Heart right ventricle (tissue), 16 donors: ENCODE measurements at regions of chr21 and their contacts with region 1.

Region 1: DNA sequence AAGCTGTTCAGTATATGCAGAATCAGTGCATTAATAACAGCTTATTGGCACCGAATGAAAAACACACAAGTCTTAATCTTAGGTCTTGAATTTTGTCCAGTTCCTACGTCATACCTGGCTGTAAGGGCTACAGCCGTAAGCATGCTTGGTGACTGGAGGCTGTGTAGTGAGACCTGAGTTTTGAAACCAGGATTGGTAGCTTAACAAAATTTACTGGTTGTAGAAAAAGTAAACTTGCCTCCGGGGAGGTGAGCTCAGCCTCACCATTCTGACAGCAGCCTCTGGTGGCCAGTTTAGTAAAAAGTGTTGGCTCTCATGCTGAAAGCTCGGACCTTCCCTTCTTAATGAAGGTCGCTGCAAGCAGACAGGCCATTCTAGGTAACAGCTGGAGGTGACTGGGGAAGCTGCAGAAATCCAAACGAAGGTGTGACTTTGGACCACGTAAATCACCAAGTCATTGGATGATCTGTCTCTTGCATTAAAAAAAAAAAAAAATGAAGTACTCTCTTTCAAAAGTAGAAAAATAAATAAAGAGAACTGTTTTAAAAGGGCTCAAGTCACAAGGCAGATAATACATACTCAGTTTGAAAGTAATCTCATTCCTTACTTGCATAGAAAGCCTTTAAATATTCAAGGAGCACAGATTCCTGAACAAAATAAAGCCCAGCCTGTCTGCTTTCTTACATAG is 48.9 kb downstream of the HLCS start:
- DNase-seq: peak in 1 of 2 donors; percentile 16
- ATAC-seq: peak in 6 of 8 donors; percentile 34 to 76 (median 56)
- H3K4me3 ChIP-seq: no peak overlapping the region
- H3K27ac ChIP-seq: no peak overlapping the region
- H3K4me1 ChIP-seq: peaks cover 0 to 19% (median 11%) of the 10 kb centered on the region in 9 donors
- H3K27me3 ChIP-seq: no peaks in the 10 kb centered on the region
- CTCF ChIP-seq: peak; percentile 28 to 73 (median 48)

Region 2: GRCh38 chr21:36630485-36631206 is 287.0 kb before region 1 on chr21:
- intact Hi-C with region 1: loop called in 4 of 10 experiments (anchors 5 to 10 kb)
- DNase-seq: peak; percentile 39 to 41
- ATAC-seq: peak in 3 of 8 donors; percentile 33 to 41 (median 37)
- H3K4me3 ChIP-seq: no peak overlapping the region
- H3K27ac ChIP-seq: no peak overlapping the region
- H3K4me1 ChIP-seq: no peaks in the 10 kb centered on the region
- H3K27me3 ChIP-seq: peaks cover 0 to 57% (median 34%) of the 10 kb centered on the region in 7 donors
- CTCF ChIP-seq: peak; percentile 51 to 82 (median 70)

Region 3: DNA sequence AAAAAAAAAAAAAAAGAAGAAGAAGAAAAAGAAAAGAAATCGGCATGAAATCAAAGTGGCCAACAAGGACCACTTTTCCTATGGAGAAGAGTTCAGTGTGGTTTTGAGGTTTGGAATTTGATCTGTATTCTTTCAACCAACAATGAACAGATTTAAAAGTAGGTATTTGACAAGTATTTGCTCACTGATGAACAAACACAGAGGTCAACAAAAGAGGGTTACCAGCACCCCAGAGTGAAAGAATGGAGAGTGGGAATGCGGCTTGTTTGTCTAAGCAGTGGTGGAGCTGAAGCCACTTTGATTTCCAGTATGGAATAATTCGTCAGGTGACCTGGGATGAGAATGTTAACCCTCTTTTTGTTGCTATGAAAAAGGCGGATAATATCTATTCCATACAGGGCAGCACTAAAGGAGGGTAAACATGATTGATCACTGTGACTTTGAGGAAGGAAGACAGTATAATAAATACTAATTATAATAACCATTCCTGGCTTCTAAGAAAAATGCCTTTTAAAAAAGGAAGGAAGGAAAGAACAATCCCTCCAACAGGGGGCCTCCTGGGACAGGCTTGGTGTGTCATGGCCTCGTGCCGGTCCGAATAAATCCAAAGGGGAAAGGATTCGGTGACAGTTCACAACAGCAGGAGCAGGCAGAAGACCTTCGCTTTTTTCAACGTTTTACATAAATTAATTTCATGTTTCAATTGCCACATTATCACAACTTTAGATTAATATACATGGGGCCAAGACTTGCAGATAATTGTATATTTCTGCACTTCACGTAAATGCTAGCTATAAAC is 255.9 kb before region 1 on chr21:
- intact Hi-C with region 1: loop called in 1 of 10 experiments (anchors 5 kb)
- DNase-seq: peak in 1 of 2 donors; percentile 36
- ATAC-seq: peak in 2 of 8 donors; percentile 47 to 63
- H3K4me3 ChIP-seq: no peak overlapping the region
- H3K27ac ChIP-seq: no peak overlapping the region
- H3K4me1 ChIP-seq: peaks cover 0 to 4% (median 0%) of the 10 kb centered on the region in 9 donors
- H3K27me3 ChIP-seq: peaks cover 0 to 71% (median 50%) of the 10 kb centered on the region in 7 donors
- CTCF ChIP-seq: peak in 7 of 9 donors; percentile 38 to 63 (median 52)

Region 4: GRCh38 chr21:36692835-36693488 is 224.7 kb before region 1 on chr21:
- intact Hi-C with region 1: no loop called
- DNase-seq: no peak
- ATAC-seq: peak in 3 of 8 donors; percentile 20 to 43 (median 31)
- H3K4me3 ChIP-seq: no peak overlapping the region
- H3K27ac ChIP-seq: no peak overlapping the region
- H3K4me1 ChIP-seq: peaks cover 3 to 37% (median 24%) of the 10 kb centered on the region in 9 donors
- H3K27me3 ChIP-seq: peaks cover 52 to 100% (median 94%) of the 10 kb centered on the region in 7 donors
- CTCF ChIP-seq: peak in 6 of 9 donors; percentile 15 to 31 (median 18)

Region 5: GRCh38 chr21:36747815-36748383 is 169.7 kb before region 1 on chr21:
- intact Hi-C with region 1: loop called in 7 of 10 experiments (anchors 5 to 10 kb)
- DNase-seq: peak; percentile 38 to 60
- ATAC-seq: peak; percentile 42 to 85 (median 66)
- H3K4me3 ChIP-seq: peak overlapping the region; percentile 34 to 60 (median 53)
- H3K27ac ChIP-seq: peak overlapping the region in 1 of 10 donors; percentile 39
- H3K4me1 ChIP-seq: peaks cover 0 to 28% (median 9%) of the 10 kb centered on the region in 9 donors
- H3K27me3 ChIP-seq: peaks cover 0 to 51% (median 13%) of the 10 kb centered on the region in 7 donors
- CTCF ChIP-seq: peak in 5 of 9 donors; percentile 6 to 38 (median 35)

Region 6: DNA sequence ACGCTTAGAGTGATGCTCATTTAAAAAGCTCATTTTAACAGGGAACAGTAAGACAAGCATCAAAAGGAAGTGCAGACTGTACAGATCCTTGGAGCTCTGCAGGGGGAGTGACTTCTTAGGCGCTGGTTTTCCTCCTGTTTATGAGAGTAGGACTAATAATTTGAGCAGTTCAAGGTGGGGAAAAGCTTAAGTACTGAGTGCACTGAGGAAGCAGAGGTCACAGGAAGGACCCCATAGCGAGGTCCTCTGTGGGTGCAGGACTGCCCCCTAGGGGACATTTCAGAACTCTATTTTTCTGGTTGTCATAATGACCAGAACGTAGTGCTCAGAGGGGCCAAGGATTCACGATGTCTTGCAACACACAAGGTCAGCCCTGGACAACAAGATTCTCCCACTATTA is 63.2 kb before region 1 on chr21:
- intact Hi-C with region 1: loop called in 1 of 10 experiments (anchors 10 kb)
- DNase-seq: peak in 1 of 2 donors; percentile 41
- ATAC-seq: peak; percentile 38 to 86 (median 66)
- H3K4me3 ChIP-seq: no peak overlapping the region
- H3K27ac ChIP-seq: no peak overlapping the region
- H3K4me1 ChIP-seq: peaks cover 0 to 9% (median 0%) of the 10 kb centered on the region in 9 donors
- H3K27me3 ChIP-seq: no peaks in the 10 kb centered on the region
- CTCF ChIP-seq: peak; percentile 32 to 79 (median 66)

Region 7: DNA sequence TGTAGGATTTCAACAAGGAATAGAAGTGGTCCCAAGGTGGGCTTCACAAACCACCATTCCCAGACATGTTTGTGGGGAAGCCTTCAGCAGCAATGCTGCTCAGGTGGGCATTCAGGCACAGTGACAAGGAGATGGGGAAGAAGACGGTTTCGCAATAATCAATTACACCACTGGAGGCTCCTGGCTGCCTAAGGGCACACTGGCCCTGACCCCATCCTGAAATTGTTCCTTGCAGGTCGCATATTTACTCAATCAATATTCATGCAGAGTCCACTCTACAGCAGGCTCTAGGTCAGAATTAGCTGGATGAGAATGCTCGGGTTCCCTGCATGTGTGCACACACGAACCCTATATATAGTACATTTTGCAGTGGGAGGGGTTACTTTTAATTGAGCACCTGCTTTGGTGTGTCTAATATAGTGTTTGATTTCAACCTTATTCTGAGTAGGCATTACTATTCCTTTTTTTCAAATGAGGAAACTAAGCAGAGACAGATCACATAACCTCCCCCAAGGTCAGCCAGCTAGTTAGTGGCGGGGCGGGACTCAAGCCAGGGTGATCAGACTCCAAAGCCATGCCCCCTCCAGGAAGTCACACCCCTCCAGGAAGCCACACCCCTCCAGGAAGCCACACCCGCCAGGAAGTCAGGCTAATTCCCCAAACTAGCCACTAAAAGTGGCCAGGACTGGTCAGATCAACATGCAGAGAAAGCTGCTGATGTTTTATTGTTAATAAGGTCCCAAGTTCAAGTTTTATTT is 57.7 kb before region 1 on chr21:
- intact Hi-C with region 1: loop called in 2 of 10 experiments (anchors 5 to 10 kb)
- DNase-seq: peak; percentile 81 to 88
- ATAC-seq: peak; percentile 95 to 99 (median 98)
- H3K4me3 ChIP-seq: no peak overlapping the region
- H3K27ac ChIP-seq: peak overlapping the region in 9 of 10 donors; percentile 7 to 76 (median 65)
- H3K4me1 ChIP-seq: peaks cover under 1 to 18% (median 9%) of the 10 kb centered on the region in 9 donors
- H3K27me3 ChIP-seq: no peaks in the 10 kb centered on the region
- CTCF ChIP-seq: no peak